H1 (cell line): ENCODE measurements at regions of chr6 and their contacts with region 1.

Region 1: GRCh38 chr6:41442800-41443501 is 103.2 kb upstream of the FOXP4 start:
- DNase-seq: peak; percentile 71 to 93
- H3K4me3 ChIP-seq: peak overlapping the region; percentile 43 to 76 (median 51)
- H3K27ac ChIP-seq: peak overlapping the region; percentile 10; the same call in 1 of the 2 replicates
- H3K4me1 ChIP-seq: peaks cover 10 to 24% (median 14%) of the 10 kb centered on the region in 4 experiments
- H3K27me3 ChIP-seq: peaks cover 1 to 21% (median 13%) of the 10 kb centered on the region in 4 experiments
- CTCF ChIP-seq: peak; percentile 80 to 87 (median 83)
- EP300 ChIP-seq: no peak
- POLR2A ChIP-seq: no peak; a peak in 1 of 3 replicates
- RAD21 ChIP-seq: peak; percentile 67 to 78

Region 2: GRCh38 chr6:41399424-41399823 is 43.5 kb before region 1 on chr6:
- CTCF ChIA-PET with region 1: no interaction called
- POLR2A ChIA-PET with region 1: no interaction called
- DNase-seq: no peak
- H3K4me3 ChIP-seq: no peak overlapping the region
- H3K27ac ChIP-seq: no peak overlapping the region
- H3K4me1 ChIP-seq: peaks cover 0 to 3% (median 0%) of the 10 kb centered on the region in 4 experiments; a peak in 2 of 7 replicates
- H3K27me3 ChIP-seq: peaks cover 4 to 36% (median 22%) of the 10 kb centered on the region in 4 experiments
- CTCF ChIP-seq: no peak
- EP300 ChIP-seq: no peak
- POLR2A ChIP-seq: no peak
- RAD21 ChIP-seq: no peak

Region 3: DNA sequence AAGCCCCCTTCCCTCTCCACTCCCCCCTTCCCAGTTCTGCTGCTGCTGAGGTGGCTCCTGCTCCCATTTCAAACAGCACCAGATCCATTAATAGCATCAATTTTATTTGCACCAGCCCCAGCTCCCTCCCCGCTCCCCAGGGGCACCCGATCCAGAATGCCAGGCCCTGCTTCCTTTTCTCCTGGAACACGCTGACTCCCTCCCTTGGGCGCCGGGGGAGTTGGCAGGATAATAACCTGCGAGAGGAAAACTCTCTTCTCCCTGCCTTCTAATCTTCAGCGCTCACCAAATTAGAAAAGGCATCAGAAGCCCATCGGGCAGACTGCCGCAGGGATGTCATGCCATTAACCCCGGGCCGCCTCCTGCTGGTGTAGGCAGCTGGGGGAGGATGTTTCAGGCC is 29.7 kb before region 1 on chr6:
- CTCF ChIA-PET with region 1: interaction called, 15 read pairs
- POLR2A ChIA-PET with region 1: no interaction called
- DNase-seq: no peak
- H3K4me3 ChIP-seq: peak overlapping the region in 1 of 4 experiments; percentile 32; a peak in 2 of 8 replicates
- H3K27ac ChIP-seq: no peak overlapping the region
- H3K4me1 ChIP-seq: peaks cover 4 to 25% (median 12%) of the 10 kb centered on the region in 4 experiments
- H3K27me3 ChIP-seq: peaks cover 89 to 100% (median 99%) of the 10 kb centered on the region in 4 experiments
- CTCF ChIP-seq: no peak
- EP300 ChIP-seq: no peak
- POLR2A ChIP-seq: no peak
- RAD21 ChIP-seq: no peak

Region 4: GRCh38 chr6:41455818-41456217 is 12.9 kb after region 1 on chr6:
- CTCF ChIA-PET with region 1: interaction called, 130 read pairs
- POLR2A ChIA-PET with region 1: interaction called, 18 read pairs
- DNase-seq: no peak
- H3K4me3 ChIP-seq: no peak overlapping the region
- H3K27ac ChIP-seq: no peak overlapping the region
- H3K4me1 ChIP-seq: peaks cover 5 to 15% (median 8%) of the 10 kb centered on the region in 4 experiments
- H3K27me3 ChIP-seq: peaks cover 0 to 8% (median 0%) of the 10 kb centered on the region in 4 experiments; a peak in 4 of 7 replicates
- CTCF ChIP-seq: no peak
- EP300 ChIP-seq: no peak
- POLR2A ChIP-seq: no peak
- RAD21 ChIP-seq: no peak

Region 5: DNA sequence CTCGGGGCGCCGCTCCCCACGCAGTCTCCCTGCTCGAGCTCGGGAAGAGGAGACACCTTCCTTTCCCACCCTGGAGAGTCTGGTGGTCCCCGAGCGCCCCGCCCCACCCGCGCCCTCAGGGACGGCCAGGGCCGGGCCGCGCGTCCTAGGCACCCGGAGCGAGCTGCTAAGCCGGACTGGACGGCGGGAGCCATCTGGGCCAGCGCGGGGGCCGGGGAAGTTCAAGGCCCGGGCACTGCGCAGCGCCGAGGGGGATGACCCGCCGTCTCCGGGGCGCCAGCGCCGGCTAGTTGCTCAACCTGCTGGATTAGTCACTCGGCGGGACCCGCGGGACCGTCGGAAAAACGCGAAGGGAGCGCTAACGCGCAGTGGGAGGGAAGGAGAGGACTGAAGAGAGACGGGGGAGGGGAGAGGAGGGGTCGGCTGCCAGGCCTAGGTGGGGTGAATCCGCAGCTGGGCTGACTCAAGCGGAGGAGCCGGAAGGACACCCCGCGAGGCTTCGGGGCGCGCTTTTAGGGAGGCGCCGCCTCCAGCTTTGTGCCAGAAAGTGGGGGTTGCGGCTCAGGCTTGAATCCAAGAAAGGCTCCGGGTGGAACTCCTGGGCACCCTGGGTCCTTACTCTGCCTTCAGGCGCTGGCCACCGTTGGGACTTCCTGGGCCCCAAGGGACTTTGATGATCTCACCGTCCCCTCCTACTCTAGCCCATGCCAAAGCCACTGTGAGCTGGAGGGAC is 27.5 kb after region 1 on chr6:
- CTCF ChIA-PET with region 1: interaction called, 66 read pairs
- POLR2A ChIA-PET with region 1: interaction called, 5 read pairs
- DNase-seq: peak in 1 of 2 experiments; percentile 79
- H3K4me3 ChIP-seq: peak overlapping the region; percentile 31 to 64 (median 43)
- H3K27ac ChIP-seq: no peak overlapping the region
- H3K4me1 ChIP-seq: peaks cover 21 to 29% (median 23%) of the 10 kb centered on the region in 4 experiments
- H3K27me3 ChIP-seq: peaks cover 15 to 63% (median 56%) of the 10 kb centered on the region in 4 experiments
- CTCF ChIP-seq: no peak
- EP300 ChIP-seq: no peak
- POLR2A ChIP-seq: no peak
- RAD21 ChIP-seq: no peak

Region 6: DNA sequence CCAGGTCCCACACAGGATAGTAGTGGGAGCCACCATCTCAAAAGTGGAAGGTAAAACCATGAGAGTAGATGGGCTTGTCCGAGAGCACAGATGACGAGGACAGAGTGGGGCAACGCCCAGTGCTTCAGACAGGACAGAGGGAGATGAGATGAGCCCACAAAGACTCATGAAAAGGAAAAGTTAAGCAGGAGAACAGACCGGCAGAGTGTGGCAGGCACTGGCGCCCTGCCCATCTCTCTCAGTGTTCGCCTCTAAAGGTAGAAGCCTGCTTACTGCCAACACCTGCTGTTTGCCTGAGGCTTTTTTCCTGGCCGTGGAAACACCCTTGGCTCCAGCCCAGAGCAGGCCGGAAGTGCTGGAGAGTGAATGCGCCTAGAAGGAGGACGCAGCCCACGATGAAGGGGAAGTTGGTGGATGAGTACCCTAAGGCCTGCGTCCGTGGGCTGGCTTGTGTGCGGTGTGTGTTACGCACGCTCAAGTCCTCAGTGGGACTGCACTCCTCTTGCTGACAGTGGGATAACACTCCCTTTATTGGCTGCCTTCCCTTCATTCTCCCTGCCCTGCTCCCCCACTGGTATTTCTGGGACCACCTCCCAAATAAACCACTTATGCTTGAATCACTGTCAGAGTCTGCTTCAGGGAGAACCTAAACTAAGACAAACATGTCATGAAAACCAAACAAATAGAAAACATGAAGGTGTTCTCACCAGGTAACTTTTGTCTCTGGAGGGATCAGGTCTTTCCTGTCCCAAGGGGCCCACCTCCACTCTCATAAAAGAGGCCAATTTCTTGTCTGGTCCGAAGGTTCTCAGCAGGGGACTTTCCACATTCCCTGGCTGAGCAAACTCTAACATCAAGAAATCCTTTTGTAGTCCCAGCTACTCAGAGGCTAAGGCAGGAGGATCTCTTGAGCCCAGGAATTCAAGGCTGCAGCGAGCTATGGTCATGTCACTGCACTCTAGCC is 94.1 kb after region 1 on chr6:
- CTCF ChIA-PET with region 1: interaction called, 10 read pairs
- POLR2A ChIA-PET with region 1: no interaction called
- DNase-seq: no peak
- H3K4me3 ChIP-seq: no peak overlapping the region
- H3K27ac ChIP-seq: no peak overlapping the region
- H3K4me1 ChIP-seq: peaks cover 0 to under 1% (median 0%) of the 10 kb centered on the region in 4 experiments; a peak in 2 of 7 replicates
- H3K27me3 ChIP-seq: peaks cover 0 to 10% (median under 1%) of the 10 kb centered on the region in 4 experiments; a peak in 4 of 7 replicates
- CTCF ChIP-seq: no peak
- EP300 ChIP-seq: no peak
- POLR2A ChIP-seq: no peak
- RAD21 ChIP-seq: no peak

Region 7: DNA sequence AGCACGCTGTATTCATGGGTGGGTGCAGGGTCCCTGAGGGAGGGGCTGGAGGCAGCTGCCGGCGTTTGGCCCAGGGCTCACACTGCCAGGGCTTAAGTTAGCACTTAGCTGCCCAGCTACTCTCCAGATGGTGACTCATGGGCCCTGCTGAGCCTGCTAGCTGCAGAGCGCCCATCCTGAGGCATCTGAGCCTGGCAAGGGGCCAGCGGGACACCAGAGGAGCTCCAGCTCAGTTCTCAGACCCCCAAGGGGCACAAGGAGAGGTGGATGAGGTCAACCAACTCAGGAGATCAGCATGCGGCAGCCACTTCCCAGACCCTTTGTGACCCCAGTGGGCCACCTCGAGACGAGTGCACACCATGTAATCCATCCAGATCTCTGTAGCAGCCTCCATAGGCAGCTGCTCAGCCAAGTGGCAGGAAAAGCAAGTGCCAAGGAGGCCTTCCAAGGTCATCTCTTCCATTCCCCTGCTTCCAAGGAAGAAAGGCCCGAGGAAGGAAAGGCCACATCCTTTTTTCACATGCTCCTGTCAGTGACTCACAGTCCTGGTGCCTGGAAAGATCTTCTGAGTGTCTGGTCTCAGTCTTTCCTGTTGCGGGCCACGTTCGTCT is 138.5 kb after region 1 on chr6:
- CTCF ChIA-PET with region 1: interaction called, 10 read pairs
- POLR2A ChIA-PET with region 1: no interaction called
- DNase-seq: no peak
- H3K4me3 ChIP-seq: no peak overlapping the region
- H3K27ac ChIP-seq: no peak overlapping the region
- H3K4me1 ChIP-seq: peaks cover 16 to 48% (median 36%) of the 10 kb centered on the region in 4 experiments
- H3K27me3 ChIP-seq: no peaks in the 10 kb centered on the region
- CTCF ChIP-seq: no peak
- EP300 ChIP-seq: no peak
- POLR2A ChIP-seq: no peak
- RAD21 ChIP-seq: no peak